Right cardiac atrium (tissue), 5 donors: ENCODE measurements at regions of chr3 and their contacts with region 1.

Region 1: GRCh38 chr3:105527949-105528348 is 161.2 kb downstream of the ALCAM start:
- DNase-seq: no peak
- ATAC-seq: no peak
- H3K4me3 ChIP-seq: no peak overlapping the region
- H3K27ac ChIP-seq: no peak overlapping the region
- H3K4me1 ChIP-seq: no peaks in the 10 kb centered on the region
- H3K27me3 ChIP-seq: no peaks in the 10 kb centered on the region

Region 2: DNA sequence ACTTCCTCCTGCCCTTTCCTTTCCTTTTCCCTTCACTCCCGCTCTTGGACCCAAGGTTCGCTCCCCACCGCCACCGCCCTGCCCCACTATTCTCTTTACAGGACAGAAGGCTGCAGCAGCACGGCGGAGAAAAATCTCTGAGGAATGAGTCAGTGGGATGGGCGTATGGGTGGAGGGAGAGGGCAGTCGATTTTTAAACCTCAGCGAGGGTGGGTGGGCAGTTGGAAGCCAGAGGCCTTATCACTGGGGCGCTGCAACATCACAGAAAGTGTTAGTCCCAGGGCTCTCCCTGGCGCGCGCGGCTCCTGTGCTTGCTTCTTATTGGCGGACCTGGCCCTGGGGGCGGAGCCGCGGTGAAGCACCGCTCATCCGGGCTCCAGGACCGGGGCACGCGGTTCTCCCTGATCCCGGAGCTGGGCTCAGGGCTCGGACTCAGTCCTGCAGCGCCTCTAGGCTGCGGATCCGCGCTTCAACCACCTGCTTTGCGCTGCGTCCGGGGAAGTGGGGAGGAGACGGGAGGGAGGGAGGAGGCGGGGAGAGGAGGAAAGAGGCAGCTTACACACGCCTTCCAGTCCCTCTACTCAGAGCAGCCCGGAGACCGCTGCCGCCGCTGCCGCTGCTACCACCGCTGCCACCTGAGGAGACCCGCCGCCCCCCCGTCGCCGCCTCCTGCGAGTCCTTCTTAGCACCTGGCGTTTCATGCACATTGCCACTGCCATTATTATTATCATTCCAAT is 161.5 kb before region 1 on chr3 and contains the start of gene ALCAM:
- intact Hi-C with region 1: loop called in 1 of 4 experiments (anchors 10 kb)
- DNase-seq: peak; percentile 93 to 96 (median 96)
- ATAC-seq: peak; percentile 98
- H3K4me3 ChIP-seq: peak within 1 kb of the TSS; percentile 51
- H3K27ac ChIP-seq: peak within 1 kb of the TSS; percentile 20
- H3K4me1 ChIP-seq: no peaks in the 10 kb centered on the region
- H3K27me3 ChIP-seq: no peaks in the 10 kb centered on the region
- total RNA-seq, gene ALCAM: 14.4 to 50.9 (median 18.4) TPM

Region 3: GRCh38 chr3:105594219-105594618 is 66.3 kb after region 1 on chr3:
- intact Hi-C with region 1: no loop called
- DNase-seq: no peak
- ATAC-seq: no peak
- H3K4me3 ChIP-seq: no peak overlapping the region
- H3K27ac ChIP-seq: no peak overlapping the region
- H3K4me1 ChIP-seq: no peaks in the 10 kb centered on the region
- H3K27me3 ChIP-seq: no peaks in the 10 kb centered on the region

Region 4: GRCh38 chr3:105606016-105606415 is 78.1 kb after region 1 on chr3:
- intact Hi-C with region 1: no loop called
- DNase-seq: no peak
- ATAC-seq: no peak
- H3K4me3 ChIP-seq: no peak overlapping the region
- H3K27ac ChIP-seq: no peak overlapping the region
- H3K4me1 ChIP-seq: no peaks in the 10 kb centered on the region
- H3K27me3 ChIP-seq: no peaks in the 10 kb centered on the region